Activated CD8-positive, alpha-beta memory T cell treated with anti-CD3 and anti-CD28 coated beads, Interleukin-2, amount 10 ng/mL, durations not matched to agents 7 days and 5 days (primary cell): ENCODE measurements at regions of chr2 and their contacts with region 1.

Region 1: GRCh38 chr2:85420536-85421259 is 2.2 kb downstream of the SH2D6 start:
- DNase-seq: peak; percentile 94
- ATAC-seq: peak; percentile 72
- H3K4me3 Mint-ChIP-seq: peak overlapping the region; percentile 45
- H3K27ac Mint-ChIP-seq: peak overlapping the region; percentile 81
- H3K4me1 Mint-ChIP-seq: peaks cover 25% of the 10 kb centered on the region
- H3K27me3 Mint-ChIP-seq: no peaks in the 10 kb centered on the region

Region 2: DNA sequence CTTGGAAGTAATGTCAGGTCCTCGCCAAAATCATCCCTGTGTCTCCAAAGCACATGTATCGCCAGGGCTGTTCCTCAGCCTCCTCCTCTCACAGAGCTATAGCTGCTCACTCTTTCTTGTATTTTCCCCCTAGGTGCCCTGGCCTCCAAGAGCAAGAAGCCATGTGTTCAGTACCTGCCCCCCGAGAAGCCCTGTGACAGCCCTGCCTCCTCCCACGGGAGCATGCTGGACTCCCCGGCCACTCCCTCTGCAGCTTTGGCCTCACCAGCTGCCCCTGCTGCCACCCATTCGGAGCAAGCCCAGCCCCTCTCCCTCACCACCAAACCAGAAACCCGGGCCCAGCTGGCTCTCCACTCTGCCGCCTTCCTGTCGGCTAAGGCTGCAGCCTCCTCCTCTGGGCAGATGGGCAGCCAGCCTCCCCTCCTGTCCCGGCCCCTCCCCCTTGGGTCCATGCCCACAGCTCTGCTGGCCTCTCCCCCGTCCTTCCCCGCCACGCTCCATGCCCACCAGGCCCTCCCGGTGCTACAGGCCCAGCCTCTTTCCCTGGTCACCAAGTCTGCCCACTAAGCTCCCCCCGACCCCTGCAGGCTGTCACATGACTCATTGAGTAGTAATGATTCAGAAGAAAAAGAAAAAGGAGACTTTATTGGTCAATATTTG is 111.7 kb before region 1 on chr2:
- CTCF ChIA-PET with region 1: no interaction called
- DNase-seq: no peak
- ATAC-seq: peak; percentile 34
- H3K4me3 Mint-ChIP-seq: no peak overlapping the region
- H3K27ac Mint-ChIP-seq: no peak overlapping the region
- H3K4me1 Mint-ChIP-seq: peaks cover 21% of the 10 kb centered on the region
- H3K27me3 Mint-ChIP-seq: peaks cover 5% of the 10 kb centered on the region

Region 3: GRCh38 chr2:85354286-85355072 is 66.2 kb before region 1 on chr2 and contains the starts of genes ELMOD3 and RETSAT:
- CTCF ChIA-PET with region 1: interaction called, 11 read pairs
- DNase-seq: peak; percentile 99
- ATAC-seq: peak; percentile 99
- H3K4me3 Mint-ChIP-seq: peak within 1 kb of the TSS; percentile 97
- H3K27ac Mint-ChIP-seq: peak within 1 kb of the TSS; percentile 93
- H3K4me1 Mint-ChIP-seq: peaks cover 44% of the 10 kb centered on the region
- H3K27me3 Mint-ChIP-seq: no peaks in the 10 kb centered on the region
- total RNA-seq, gene ELMOD3: 21.7 to 27.7 TPM
- total RNA-seq, gene RETSAT: 28.2 to 35.5 TPM

Region 4: DNA sequence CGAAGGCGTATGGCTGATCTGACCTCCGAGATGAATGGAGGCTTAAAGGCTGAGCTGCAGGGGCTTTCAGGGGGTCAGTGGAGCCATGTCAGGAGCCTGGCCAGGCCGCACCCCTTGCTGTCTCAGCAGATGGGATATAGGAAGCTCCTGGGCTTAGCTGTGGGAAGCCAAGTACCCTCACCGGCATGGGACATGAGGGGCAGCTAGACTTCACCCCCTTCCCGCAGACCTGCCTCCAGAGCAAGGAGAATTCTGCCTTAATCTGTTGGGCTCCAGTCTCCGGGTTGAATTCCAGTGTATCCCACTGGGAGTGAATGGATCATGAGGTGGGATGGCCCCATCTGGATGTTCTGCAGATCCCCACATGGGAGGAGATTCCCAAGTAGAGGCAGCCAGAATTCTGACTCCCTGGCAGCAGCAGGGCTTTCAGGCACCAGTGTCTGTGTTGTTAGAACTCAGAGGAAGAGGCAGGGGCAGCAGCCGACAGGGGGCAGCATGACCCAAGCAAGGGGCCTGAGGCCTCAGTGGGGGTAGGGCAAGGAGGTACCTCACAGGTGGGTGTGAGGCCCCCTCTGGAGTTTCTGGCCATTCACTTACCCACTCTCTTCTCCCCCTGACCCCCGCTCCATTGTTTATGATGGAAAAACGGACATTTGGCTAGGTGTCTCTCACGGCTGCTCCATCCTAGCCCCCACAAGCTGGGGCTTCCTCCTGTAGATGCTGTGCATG is 29.6 kb before region 1 on chr2:
- CTCF ChIA-PET with region 1: interaction called, 26 read pairs
- DNase-seq: peak; percentile 79
- ATAC-seq: peak; percentile 81
- H3K4me3 Mint-ChIP-seq: no peak overlapping the region
- H3K27ac Mint-ChIP-seq: no peak overlapping the region
- H3K4me1 Mint-ChIP-seq: peaks cover 10% of the 10 kb centered on the region
- H3K27me3 Mint-ChIP-seq: no peaks in the 10 kb centered on the region

Region 5: DNA sequence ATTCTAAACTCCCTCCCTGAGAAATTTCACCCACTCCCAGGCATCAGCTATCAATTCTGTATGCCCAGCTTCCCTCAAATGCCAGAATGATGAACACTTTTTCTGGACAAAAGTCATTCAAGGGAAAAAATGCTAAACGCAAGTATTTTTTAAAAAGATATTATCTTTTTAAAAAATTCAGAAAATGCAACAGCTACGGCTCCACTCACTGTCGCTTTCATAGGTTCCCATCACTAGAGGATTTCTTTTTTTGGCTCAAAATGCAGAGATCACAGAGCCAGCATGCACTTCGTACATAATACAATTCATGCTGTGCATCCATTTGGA is 15.7 kb before region 1 on chr2:
- CTCF ChIA-PET with region 1: interaction called, 14 read pairs
- DNase-seq: no peak
- ATAC-seq: no peak
- H3K4me3 Mint-ChIP-seq: peak overlapping the region; percentile 40
- H3K27ac Mint-ChIP-seq: peak overlapping the region; percentile 81
- H3K4me1 Mint-ChIP-seq: peaks cover 45% of the 10 kb centered on the region
- H3K27me3 Mint-ChIP-seq: no peaks in the 10 kb centered on the region

Region 6: DNA sequence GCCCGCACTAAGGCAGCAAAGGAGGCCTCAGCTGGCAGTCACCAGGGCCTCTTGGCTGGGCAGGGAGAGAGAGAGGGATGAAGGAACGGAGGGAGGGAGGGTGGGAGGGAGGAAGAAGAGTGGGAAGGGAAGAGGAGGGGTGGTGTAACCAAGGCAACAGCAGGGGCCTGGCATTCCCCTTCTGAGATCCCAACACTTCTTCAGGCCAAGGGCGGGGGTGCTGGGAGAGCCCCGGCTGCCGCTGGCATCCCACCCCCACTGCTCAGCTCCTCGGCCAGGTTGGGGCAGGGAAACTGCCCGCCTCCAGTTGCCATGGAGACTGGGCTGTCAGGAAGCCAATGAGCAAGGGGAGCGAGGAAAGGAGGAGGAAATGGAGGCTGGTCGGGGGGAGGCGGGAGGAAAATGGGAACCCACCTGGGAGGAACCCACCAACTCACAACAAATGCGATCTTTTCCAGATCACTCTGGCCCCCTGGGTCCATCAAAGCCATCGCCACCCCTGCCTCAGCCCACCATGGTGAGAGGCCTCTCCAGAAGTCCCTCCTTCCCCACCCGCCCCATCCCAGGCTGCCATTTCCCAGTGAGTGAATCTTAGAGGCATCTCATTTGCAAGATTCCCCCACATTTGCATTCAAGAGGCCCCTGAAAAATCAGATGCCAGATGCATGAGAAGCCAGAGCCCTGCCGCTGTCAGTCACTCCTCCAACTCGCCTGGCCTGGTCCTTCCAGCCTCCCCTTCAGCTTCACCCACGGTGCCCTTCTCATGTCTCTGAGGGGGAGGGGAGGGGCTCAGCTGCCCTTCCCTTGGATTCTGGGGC is 10.3 kb after region 1 on chr2:
- CTCF ChIA-PET with region 1: interaction called, 11 read pairs
- DNase-seq: no peak
- ATAC-seq: no peak
- H3K4me3 Mint-ChIP-seq: no peak overlapping the region
- H3K27ac Mint-ChIP-seq: no peak overlapping the region
- H3K4me1 Mint-ChIP-seq: no peaks in the 10 kb centered on the region
- H3K27me3 Mint-ChIP-seq: no peaks in the 10 kb centered on the region

Region 7: DNA sequence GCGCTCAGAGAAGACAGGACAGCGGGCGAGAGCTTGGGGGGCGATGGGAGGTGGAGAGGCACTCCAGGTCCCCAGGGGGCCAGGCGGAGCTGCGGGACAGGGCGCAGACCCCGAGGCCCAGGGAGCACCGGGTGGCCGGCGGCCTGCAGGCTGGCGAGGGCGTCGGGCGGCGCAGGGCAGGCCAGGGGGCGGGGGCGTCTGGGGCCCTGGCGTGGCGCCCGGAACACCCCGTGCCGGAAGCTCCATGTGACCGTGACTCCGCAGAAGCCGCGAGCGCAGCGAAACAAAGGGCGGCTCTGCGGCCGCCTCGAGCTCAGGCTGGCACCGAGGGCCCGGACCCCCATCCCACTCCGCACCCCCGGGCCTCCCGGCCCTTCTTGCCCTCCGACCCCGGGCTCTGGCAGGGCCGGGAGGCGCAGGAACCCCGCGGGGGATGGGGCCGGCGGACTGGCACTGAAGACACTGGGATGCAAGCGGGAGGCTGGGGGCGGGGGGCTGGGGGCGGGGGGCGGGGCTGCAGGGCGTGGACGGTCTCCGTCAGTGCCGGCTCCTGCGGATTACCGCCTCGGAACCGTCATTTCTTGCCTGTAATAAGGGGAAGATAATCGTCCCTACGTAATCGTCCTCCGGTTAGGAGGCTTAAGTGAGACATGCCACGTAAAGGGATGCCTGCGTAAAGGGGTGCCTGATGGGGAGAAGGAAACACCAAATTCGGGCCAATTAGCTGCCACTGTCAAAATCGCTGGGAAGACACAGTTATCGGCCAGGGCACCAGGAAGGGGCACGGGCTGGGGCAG is 17.0 kb after region 1 on chr2:
- CTCF ChIA-PET with region 1: interaction called, 10 read pairs
- DNase-seq: peak; percentile 79
- ATAC-seq: peak; percentile 79
- H3K4me3 Mint-ChIP-seq: peak overlapping the region; percentile 77
- H3K27ac Mint-ChIP-seq: peak overlapping the region; percentile 89
- H3K4me1 Mint-ChIP-seq: peaks cover 36% of the 10 kb centered on the region
- H3K27me3 Mint-ChIP-seq: no peaks in the 10 kb centered on the region

Region 8: DNA sequence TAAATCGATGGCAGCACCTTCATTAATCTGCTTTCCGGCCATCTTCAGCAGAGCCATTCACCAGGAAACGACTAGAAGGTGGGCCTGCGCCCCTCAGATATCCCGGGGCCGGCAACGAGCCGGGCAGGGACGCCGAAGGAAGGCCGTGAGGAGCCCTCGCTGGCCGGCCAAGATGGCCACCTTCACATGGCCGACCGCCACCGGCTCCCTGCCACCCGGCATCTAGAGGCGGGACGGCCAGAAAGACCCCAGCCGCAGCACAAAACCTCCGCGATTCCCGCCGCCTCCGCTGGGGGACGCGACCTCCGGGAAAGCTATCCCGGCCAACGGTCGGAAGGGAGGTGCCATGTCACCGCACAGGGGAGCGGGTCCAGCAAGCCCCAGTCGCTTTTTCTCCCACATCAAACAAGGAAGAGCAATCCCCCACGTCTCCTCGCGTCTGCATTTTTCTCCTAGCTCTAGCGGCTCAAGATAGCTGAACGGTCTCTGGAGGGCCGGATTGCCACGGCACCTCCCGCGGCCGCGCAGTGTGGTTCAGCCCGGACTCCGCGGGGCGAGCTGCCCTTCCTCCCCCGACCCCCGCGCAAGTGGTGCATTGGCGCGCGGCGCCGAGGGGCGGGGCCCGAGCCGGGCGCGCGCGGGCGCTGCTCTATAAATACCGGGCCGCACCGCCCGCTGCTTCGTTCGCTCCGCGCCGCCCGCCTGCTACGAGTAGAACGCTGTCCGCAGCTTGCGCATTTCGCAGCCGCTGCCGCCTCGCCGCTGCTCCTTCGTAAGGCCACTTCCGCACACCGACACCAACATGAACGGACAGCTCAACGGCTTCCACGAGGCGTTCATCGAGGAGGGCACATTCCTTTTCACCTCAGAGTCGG is 118.0 kb after region 1 on chr2 and contains the start of gene MAT2A:
- CTCF ChIA-PET with region 1: interaction called, 458 read pairs
- DNase-seq: peak; percentile 90
- ATAC-seq: peak; percentile 79
- H3K4me3 Mint-ChIP-seq: peak within 1 kb of the TSS; percentile 96
- H3K27ac Mint-ChIP-seq: peak within 1 kb of the TSS; percentile 97
- H3K4me1 Mint-ChIP-seq: peaks cover 43% of the 10 kb centered on the region
- H3K27me3 Mint-ChIP-seq: no peaks in the 10 kb centered on the region
- total RNA-seq, gene MAT2A: 271 to 336 TPM

Region 9: DNA sequence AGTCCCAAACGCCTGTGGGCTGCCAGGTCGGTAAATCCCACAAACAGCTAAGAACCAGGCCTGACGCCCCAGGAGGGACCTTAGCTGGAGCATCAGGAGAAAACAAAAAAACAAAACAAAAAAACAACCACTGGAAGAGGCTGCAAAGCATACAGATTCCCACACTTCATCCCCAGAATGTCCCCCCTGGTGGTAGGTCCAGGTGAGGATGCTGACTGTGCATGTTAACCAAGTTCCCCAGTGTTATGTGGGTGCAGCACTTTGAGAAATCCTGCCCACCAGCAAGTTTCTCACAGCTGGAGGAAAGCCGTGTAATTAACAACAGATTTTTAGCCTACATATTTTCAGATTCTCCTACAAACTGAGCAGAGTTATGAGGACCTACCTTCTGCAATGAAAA is 453.0 kb after region 1 on chr2:
- CTCF ChIA-PET with region 1: no interaction called
- DNase-seq: no peak
- ATAC-seq: no peak
- H3K4me3 Mint-ChIP-seq: no peak overlapping the region
- H3K27ac Mint-ChIP-seq: no peak overlapping the region
- H3K4me1 Mint-ChIP-seq: peaks cover 32% of the 10 kb centered on the region
- H3K27me3 Mint-ChIP-seq: no peaks in the 10 kb centered on the region